Caco-2 (cell line): ENCODE measurements at regions of chr3 and their contacts with region 1.

Region 1: DNA sequence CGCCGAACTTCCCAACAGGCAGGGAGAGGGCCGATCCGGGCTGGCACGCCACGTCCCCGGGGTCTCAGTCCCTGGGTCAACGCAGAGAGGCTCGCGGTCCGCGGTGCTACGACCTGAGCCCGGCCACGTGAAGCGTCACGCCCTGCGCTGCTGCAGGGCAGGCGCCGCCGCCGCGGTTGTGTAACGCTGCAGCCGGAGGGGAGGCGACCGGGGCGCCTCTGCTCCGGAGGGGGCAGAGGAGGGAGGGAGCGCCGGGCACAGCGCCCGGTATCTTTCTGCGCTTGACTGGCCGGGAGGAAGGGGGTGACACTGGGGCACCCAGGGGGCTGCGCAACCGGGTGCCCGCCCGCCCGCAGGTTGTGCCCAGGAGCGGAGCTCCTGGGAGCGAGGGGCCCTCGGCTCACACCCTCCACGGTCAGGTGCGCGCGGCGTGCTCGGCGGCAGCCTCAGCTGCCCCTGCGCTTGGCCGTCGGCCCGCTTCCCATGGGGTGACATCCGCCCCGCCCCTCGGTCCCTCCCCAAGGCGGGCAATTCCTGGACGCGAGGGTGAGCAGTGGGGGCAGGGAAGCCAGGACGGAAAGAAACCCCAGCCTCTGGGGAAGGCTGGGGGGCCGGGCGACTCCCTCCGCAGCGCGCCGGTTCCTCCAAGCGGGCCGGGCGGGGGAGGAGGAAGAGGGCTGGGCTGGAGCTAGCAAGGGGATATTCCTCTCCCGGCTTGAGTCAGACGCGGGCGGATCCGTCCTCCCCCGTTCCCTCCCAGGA is 852 bp upstream of the BHLHE40 start:
- DNase-seq: peak; percentile 91 to 93
- H3K4me3 ChIP-seq: peak overlapping the region; percentile 70
- H3K4me3 Mint-ChIP-seq: peak overlapping the region; percentile 89
- H3K27ac Mint-ChIP-seq: peak overlapping the region; percentile 67
- H3K4me1 ChIP-seq: peaks cover 18% of the 10 kb centered on the region
- H3K4me1 Mint-ChIP-seq: peaks cover 17% of the 10 kb centered on the region
- H3K27me3 ChIP-seq: no peaks in the 10 kb centered on the region
- H3K27me3 Mint-ChIP-seq: no peaks in the 10 kb centered on the region
- CTCF ChIP-seq: no peak

Region 2: DNA sequence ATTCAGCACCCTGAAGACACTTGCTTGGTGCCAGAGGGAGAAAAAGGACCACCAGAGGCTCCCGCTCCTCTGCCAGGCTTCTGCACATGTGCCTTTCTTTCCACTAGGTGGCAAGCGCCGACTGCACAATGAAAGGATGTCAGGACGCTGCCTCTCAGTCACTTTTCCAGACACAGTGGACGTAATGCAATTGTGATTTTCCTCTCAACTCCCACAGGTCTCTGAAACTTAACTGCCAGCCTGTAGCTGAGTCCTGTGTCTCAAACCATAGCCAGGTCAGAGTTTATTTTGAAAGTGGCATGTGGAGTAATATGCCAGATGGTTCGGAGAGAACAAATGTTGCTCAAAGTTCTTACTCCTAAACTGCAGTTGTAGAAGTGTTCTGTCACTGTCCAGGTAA is 322.3 kb before region 1 on chr3:
- CTCF ChIA-PET with region 1: no interaction called
- POLR2A ChIA-PET with region 1: no interaction called
- intact Hi-C with region 1: loop called (anchors 1 kb)
- DNase-seq: peak; percentile 72 to 76
- H3K4me3 ChIP-seq: no peak overlapping the region
- H3K4me3 Mint-ChIP-seq: no peak overlapping the region
- H3K27ac Mint-ChIP-seq: no peak overlapping the region
- H3K4me1 ChIP-seq: no peaks in the 10 kb centered on the region
- H3K4me1 Mint-ChIP-seq: no peaks in the 10 kb centered on the region
- H3K27me3 ChIP-seq: no peaks in the 10 kb centered on the region
- H3K27me3 Mint-ChIP-seq: no peaks in the 10 kb centered on the region
- CTCF ChIP-seq: peak; percentile 87 to 96

Region 3: GRCh38 chr3:4826237-4827100 is 151.9 kb before region 1 on chr3:
- CTCF ChIA-PET with region 1: no interaction called
- POLR2A ChIA-PET with region 1: no interaction called
- intact Hi-C with region 1: loop called (anchors 5 kb)
- DNase-seq: no peak
- H3K4me3 ChIP-seq: no peak overlapping the region
- H3K4me3 Mint-ChIP-seq: no peak overlapping the region
- H3K27ac Mint-ChIP-seq: no peak overlapping the region
- H3K4me1 ChIP-seq: peaks cover 18% of the 10 kb centered on the region
- H3K4me1 Mint-ChIP-seq: peaks cover 13% of the 10 kb centered on the region
- H3K27me3 ChIP-seq: no peaks in the 10 kb centered on the region
- H3K27me3 Mint-ChIP-seq: no peaks in the 10 kb centered on the region
- CTCF ChIP-seq: no peak

Region 4: GRCh38 chr3:5026331-5027218 is 48.2 kb after region 1 on chr3:
- CTCF ChIA-PET with region 1: interaction called, 7 read pairs
- POLR2A ChIA-PET with region 1: interaction called, 3 read pairs
- intact Hi-C with region 1: loop called (anchors 1 kb)
- DNase-seq: peak; percentile 85 to 87
- H3K4me3 ChIP-seq: peak overlapping the region; percentile 48
- H3K4me3 Mint-ChIP-seq: peak overlapping the region; percentile 88
- H3K27ac Mint-ChIP-seq: peak overlapping the region; percentile 93
- H3K4me1 ChIP-seq: peaks cover 27% of the 10 kb centered on the region
- H3K4me1 Mint-ChIP-seq: peaks cover 30% of the 10 kb centered on the region
- H3K27me3 ChIP-seq: no peaks in the 10 kb centered on the region
- H3K27me3 Mint-ChIP-seq: no peaks in the 10 kb centered on the region
- CTCF ChIP-seq: peak; percentile 32 to 58

Region 5: DNA sequence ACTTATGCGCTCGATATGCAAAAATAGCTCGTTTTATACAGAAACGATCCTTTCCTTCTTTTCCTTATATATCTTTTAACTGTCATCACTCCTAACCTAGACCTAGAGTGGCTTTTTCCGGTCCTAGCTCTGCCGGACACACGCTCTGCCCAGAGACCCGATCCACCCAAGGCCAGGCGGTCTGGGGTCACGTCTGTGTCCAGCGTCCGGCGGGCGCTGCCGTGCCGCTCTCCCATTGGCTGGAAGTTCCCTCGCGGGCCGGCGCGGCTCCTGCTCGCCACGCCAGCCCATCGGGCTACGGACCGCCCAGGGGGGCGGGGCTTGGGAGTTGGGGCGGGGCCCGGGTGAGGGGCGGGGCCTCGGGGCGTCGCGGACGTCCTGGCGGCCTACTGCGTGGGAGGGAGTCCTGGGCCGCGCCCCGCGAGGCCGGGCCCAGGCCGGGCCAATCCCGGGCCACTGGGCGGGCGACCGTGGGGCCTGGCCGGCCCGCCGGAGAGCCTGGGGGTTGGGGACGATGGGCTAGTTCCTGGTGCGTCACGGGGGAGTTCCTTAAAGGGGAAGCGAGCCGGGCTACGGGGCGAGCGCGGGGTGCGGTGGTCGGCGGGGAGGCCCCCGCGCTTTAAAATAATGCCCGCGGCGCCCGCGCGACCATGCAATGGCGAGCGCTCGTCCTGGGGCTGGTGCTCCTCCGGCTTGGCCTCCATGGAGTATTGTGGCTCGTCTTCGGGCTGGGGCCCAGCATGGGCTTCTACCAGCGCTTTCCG is 209.0 kb after region 1 on chr3 and contains the start of gene EDEM1:
- CTCF ChIA-PET with region 1: no interaction called
- POLR2A ChIA-PET with region 1: no interaction called
- intact Hi-C with region 1: loop called (anchors 5 kb)
- DNase-seq: peak; percentile 93 to 97
- H3K4me3 ChIP-seq: peak within 1 kb of the TSS; percentile 94
- H3K4me3 Mint-ChIP-seq: peak within 1 kb of the TSS; percentile 77
- H3K27ac Mint-ChIP-seq: peak within 1 kb of the TSS; percentile 95
- H3K4me1 ChIP-seq: peaks cover 16% of the 10 kb centered on the region; the same call in 1 of the 2 replicates
- H3K4me1 Mint-ChIP-seq: peaks cover 12% of the 10 kb centered on the region
- H3K27me3 ChIP-seq: no peaks in the 10 kb centered on the region
- H3K27me3 Mint-ChIP-seq: no peaks in the 10 kb centered on the region
- CTCF ChIP-seq: no peak
- total RNA-seq, gene EDEM1: 42.6 and 51.3 TPM in 2 replicates